Activated T-helper 2 cell treated with anti-CD3 and anti-CD28 coated beads, Interferon-gamma antibody, Interleukin-2, Interleukin-4, amounts not matched to agents 10 μg/mL and 5 μg/mL and 100 μg/mL, durations not matched to agents 14 hours and 24 hours and 36 hours (primary cell): ENCODE measurements at regions of chr10 and their contacts with region 1.

Region 1: GRCh38 chr10:11631890-11632587 is 20.6 kb upstream of the USP6NL start:
- DNase-seq: no peak
- H3K4me3 Mint-ChIP-seq: no peak overlapping the region
- H3K27ac Mint-ChIP-seq: no peak overlapping the region
- H3K4me1 Mint-ChIP-seq: peaks cover 6% of the 10 kb centered on the region
- H3K27me3 Mint-ChIP-seq: peaks cover 45% of the 10 kb centered on the region

Region 2: GRCh38 chr10:11573497-11573896 is 58.5 kb before region 1 on chr10:
- intact Hi-C with region 1: no loop called
- DNase-seq: no peak
- H3K4me3 Mint-ChIP-seq: no peak overlapping the region
- H3K27ac Mint-ChIP-seq: no peak overlapping the region
- H3K4me1 Mint-ChIP-seq: no peaks in the 10 kb centered on the region
- H3K27me3 Mint-ChIP-seq: peaks cover 35% of the 10 kb centered on the region

Region 3: DNA sequence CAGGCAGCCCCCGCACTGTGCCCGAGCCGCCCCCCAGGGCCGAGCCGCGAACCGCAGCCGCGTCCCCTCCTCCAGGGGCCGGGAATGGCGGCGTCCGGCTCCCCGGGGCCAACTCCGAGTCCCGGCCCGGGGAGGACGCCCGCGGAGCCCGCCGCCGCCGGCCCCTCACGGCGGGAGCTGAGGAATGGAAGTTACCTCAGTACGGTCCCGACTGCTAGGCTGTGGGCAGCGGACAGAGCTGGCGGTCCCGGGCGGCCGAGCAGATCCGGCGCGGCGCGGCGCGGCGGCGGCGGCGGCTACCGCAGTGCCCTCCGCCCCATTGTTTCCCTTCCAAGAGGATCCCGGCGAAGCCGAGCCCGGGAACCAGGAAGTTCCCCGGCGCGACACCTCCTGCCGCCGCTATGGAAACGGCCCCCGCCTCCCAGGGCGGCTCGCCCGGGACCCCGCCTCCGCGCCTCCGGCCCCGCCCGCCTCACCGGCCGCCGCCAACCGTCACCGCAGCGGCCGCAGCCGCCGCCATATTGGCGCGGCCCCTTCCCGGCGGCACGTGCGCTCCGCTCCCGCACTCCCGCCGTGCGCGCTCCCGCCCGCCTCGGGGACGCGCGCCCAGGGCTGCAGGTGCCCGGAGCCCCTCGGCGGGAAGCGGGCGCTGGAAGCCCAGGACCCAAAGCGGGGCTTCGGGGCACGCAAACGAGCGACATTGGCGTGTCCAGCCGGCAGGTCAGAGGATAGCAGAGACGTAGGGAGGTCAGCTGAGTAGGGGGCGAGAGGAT is 20.6 kb before region 1 on chr10 and contains the start of gene USP6NL:
- intact Hi-C with region 1: loop called (anchors 2 kb)
- DNase-seq: peak; percentile 50
- H3K4me3 Mint-ChIP-seq: peak within 1 kb of the TSS; percentile 81
- H3K27ac Mint-ChIP-seq: no peak within 1 kb of the TSS
- H3K4me1 Mint-ChIP-seq: peaks cover 13% of the 10 kb centered on the region
- H3K27me3 Mint-ChIP-seq: peaks cover 60% of the 10 kb centered on the region
- total RNA-seq, gene USP6NL: 0.39 and 0.50 TPM in 2 replicates

Region 4: GRCh38 chr10:11713186-11713743 is 81.2 kb after region 1 on chr10:
- intact Hi-C with region 1: loop called (anchors 5 kb)
- DNase-seq: no peak
- H3K4me3 Mint-ChIP-seq: no peak overlapping the region
- H3K27ac Mint-ChIP-seq: no peak overlapping the region
- H3K4me1 Mint-ChIP-seq: peaks cover 13% of the 10 kb centered on the region
- H3K27me3 Mint-ChIP-seq: peaks cover 71% of the 10 kb centered on the region

Region 5: GRCh38 chr10:11724938-11725776 is 93.1 kb after region 1 on chr10:
- intact Hi-C with region 1: no loop called
- DNase-seq: no peak
- H3K4me3 Mint-ChIP-seq: no peak overlapping the region
- H3K27ac Mint-ChIP-seq: no peak overlapping the region
- H3K4me1 Mint-ChIP-seq: no peaks in the 10 kb centered on the region
- H3K27me3 Mint-ChIP-seq: peaks cover 39% of the 10 kb centered on the region